ENCODE measurements at regions of chr17 and their contacts with region 1.

Region 1: GRCh38 chr17:8079291-8080207 is 8.0 kb downstream of the ALOX12B start:
- H3K4me3 ChIP-seq: peak overlapping the region; percentile 55
- H3K27ac ChIP-seq: peak overlapping the region; percentile 79
- H3K4me1 ChIP-seq: peaks cover 7% of the 10 kb centered on the region
- CTCF ChIP-seq: peak; percentile 99

Region 2: DNA sequence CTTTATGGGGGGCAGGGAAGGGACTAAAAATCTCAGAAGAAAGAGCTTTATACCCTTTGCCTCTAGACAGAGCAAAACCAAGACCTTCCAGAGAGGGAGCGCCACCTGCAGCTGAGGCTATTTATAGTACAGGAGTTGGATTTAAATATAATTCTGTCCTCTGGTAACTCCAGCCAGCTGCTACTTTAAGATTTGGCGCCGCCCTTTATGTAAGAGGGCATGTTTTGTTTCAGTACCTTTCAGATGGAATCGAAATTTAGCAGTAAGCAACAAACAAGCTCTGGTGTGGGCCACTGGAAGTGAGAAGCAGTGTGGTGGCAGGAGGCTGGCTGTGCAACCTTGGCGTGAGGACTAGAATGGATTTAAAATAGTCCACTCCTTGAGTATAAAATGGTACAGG is 82.4 kb before region 1 on chr17:
- CTCF ChIA-PET with region 1: no interaction called
- POLR2A ChIA-PET with region 1: no interaction called
- H3K4me3 ChIP-seq: no peak overlapping the region
- H3K27ac ChIP-seq: no peak overlapping the region
- H3K4me1 ChIP-seq: no peaks in the 10 kb centered on the region
- CTCF ChIP-seq: no peak

Region 3: DNA sequence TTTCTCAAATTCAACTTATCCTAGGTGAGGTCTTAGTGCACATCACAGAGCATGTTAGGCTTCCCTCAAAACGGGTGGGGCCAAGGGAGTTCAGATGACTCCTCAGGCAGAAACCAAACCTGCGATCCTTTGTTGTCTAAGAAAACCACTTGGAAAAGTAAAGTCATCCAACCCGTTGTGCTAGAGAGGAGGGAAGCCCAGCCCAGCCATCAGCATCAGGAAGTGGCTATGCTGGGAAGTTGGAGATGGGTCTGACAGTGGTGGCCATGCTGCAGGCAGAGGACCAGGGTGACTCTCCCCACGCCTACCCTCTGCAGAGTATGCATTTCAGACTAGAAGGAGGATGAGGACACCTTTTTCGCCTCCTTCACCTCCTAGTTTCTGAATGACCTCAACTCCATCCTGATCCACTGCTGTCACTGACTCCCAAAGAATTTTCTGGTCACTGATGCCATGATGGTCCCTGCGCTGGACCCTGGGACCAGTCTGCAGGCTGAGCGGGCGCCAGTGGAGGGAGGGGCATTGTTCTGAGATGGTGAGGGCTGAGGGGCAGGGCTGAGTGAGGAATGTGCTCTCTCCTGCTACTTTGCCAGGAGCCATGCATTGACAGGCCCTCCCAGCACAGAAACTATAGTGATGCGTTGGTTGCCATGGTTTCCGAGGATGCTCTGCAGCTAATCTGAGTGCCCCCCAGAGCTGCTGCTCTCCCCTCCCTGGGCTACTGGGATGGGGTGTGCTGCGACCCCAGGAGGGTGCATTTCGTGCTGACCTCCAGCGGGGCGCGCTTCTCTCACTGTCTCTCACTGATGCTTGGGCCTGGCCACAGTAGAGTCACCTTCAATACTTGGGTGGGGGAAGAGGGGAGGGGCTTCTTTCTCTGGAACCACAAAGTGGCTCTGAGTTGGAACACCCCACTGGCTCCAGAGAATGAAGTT is 12.4 kb before region 1 on chr17:
- CTCF ChIA-PET with region 1: interaction called, 288 read pairs
- POLR2A ChIA-PET with region 1: interaction called, 4 read pairs
- H3K4me3 ChIP-seq: no peak overlapping the region
- H3K27ac ChIP-seq: no peak overlapping the region
- H3K4me1 ChIP-seq: peaks cover 13% of the 10 kb centered on the region
- CTCF ChIP-seq: no peak

Region 4: DNA sequence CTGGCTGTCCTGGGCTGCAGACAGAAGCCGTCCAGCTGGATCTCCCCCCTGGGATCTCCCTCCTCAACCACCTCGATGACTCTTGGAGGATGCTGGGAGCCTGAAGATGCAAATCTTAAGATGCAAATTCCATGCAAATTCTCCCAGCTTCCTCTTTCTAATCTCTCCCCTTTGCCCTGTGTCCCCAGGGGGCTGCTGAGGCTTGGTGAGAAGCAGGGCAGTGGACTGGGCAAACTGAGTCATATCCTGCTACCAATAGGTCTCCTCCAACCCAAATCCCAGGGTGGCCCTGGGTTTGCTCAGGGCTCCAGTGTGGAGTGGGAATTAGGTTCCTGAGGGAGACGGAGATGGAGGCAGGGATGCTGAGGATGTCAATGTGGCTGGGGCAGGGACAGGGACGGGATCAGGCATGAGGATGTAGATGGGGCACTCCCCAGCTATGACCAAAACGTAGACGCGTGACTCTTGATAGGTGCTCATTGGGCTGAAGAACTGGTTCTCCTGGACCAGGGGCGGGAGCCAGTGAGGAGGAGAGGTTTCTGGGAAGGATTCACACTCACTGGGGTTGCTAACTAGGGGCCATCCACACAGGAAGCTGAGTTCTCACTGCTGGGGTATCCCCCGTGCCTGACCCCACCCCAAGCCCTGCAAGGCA is 11.6 kb after region 1 on chr17:
- CTCF ChIA-PET with region 1: interaction called, 288 read pairs
- POLR2A ChIA-PET with region 1: interaction called, 4 read pairs
- H3K4me3 ChIP-seq: no peak overlapping the region
- H3K27ac ChIP-seq: no peak overlapping the region
- H3K4me1 ChIP-seq: no peaks in the 10 kb centered on the region
- CTCF ChIP-seq: no peak

Region 5: DNA sequence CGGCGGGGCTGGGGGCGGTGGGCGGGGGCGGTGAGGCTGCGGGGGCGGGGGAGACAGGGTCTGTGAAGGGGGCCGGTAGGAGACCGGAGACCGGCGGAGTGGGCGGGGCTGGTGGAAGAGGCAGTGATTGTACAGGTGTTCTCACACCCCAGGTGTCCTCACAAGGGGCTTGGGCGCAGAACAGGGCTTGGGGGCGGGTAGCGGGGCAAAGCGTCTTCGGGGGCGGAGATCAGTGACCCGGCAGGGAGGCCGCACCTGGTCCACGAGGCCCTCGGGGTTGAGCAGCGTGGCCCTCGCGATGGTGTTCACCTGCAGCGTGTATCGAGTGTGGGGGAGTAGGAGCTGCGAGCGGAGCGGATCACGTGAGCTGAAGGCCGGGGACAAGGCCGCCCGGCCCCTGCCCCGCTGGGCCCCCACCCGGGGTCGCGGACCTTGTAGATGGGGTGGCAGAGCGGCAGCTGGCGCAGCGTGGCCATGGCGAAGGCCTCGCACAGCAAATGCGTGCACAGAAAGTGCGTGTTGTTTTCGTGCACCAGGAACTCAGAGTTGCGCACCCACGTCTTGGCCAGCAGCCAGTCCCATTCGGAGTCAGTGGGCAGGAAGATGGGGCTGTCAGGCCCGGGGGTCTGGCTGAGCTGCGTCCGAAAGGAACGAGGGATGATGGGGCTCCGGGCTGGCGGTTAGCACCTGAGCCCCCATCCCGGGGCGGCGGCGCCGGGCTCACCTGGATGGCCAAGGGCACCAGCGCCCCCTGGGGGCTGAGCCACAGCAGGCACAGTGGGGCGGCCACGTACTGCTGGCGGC is 30.3 kb after region 1 on chr17:
- CTCF ChIA-PET with region 1: interaction called, 561 read pairs
- POLR2A ChIA-PET with region 1: no interaction called
- H3K4me3 ChIP-seq: peak overlapping the region; percentile 18
- H3K27ac ChIP-seq: no peak overlapping the region
- H3K4me1 ChIP-seq: no peaks in the 10 kb centered on the region
- CTCF ChIP-seq: peak; percentile 55

Measured in HEK293 (cell line).